ENCODE measurements at regions of chr12 and their contacts with region 1.

Region 1: GRCh38 chr12:75888874-75889613 is 142.5 kb downstream of the PHLDA1 start:
- DNase-seq: no peak
- ATAC-seq: no peak
- H3K4me3 ChIP-seq: no peak overlapping the region
- H3K4me3 Mint-ChIP-seq: no peak overlapping the region
- H3K27ac ChIP-seq: no peak overlapping the region
- H3K27ac Mint-ChIP-seq: no peak overlapping the region
- H3K4me1 ChIP-seq: no peaks in the 10 kb centered on the region
- H3K4me1 Mint-ChIP-seq: no peaks in the 10 kb centered on the region
- H3K27me3 ChIP-seq: no peaks in the 10 kb centered on the region
- H3K27me3 Mint-ChIP-seq: peaks cover 10 to 15% of the 10 kb centered on the region in 2 donors

Region 2: DNA sequence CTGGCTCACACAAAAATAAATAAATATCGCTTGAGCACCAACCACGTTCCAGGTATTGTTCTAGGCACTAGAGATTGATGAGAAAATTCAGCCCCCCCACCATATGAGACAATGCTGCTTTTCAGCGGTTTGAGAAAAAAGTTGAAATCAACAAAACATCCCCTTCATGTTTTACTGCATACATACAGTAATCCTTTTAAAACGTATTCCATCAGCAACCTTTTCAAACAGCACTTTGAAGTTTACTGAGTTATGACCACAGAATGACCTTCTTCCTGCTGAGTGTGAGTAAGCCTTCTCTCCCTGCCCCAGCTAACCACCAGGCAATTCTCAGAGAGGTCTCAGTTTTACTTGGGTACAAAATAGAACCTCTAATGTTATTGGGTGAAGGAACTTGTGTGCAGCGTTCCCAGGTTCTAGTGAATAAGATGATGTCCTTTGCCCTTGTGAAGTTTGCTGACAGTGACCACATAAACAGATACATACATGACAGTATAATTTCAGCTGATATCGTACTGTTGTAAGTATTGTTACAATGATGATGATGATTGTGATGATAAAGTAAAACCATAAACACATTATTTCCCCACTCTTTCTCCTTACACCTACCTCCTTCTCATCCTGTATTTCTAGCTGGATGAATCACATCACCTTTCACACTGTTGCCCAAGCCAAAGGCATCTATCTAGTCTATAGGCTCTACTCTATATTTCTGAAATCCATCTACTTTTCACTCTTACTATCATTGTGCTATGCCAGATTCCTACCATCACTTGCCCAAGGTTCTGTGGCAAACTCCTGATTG is 253.2 kb before region 1 on chr12:
- CTCF ChIA-PET with region 1: interaction called in 1 of 2 experiments, 11 read pairs
- POLR2A ChIA-PET with region 1: no interaction called
- DNase-seq: no peak
- ATAC-seq: peak in 1 of 4 experiments; percentile 55
- H3K4me3 ChIP-seq: no peak overlapping the region
- H3K4me3 Mint-ChIP-seq: no peak overlapping the region
- H3K27ac ChIP-seq: no peak overlapping the region
- H3K27ac Mint-ChIP-seq: no peak overlapping the region
- H3K4me1 ChIP-seq: peaks cover 0 to under 1% of the 10 kb centered on the region in 2 experiments
- H3K4me1 Mint-ChIP-seq: peaks cover 0 to 12% (median 6%) of the 10 kb centered on the region in 3 donors
- H3K27me3 ChIP-seq: no peaks in the 10 kb centered on the region
- H3K27me3 Mint-ChIP-seq: peaks cover 0 to 7% of the 10 kb centered on the region in 2 donors

Region 3: GRCh38 chr12:75774261-75775052 is 114.6 kb before region 1 on chr12:
- CTCF ChIA-PET with region 1: no interaction called
- POLR2A ChIA-PET with region 1: no interaction called
- DNase-seq: no peak
- ATAC-seq: no peak
- H3K4me3 ChIP-seq: no peak overlapping the region
- H3K4me3 Mint-ChIP-seq: no peak overlapping the region
- H3K27ac ChIP-seq: no peak overlapping the region
- H3K27ac Mint-ChIP-seq: no peak overlapping the region
- H3K4me1 ChIP-seq: no peaks in the 10 kb centered on the region
- H3K4me1 Mint-ChIP-seq: no peaks in the 10 kb centered on the region
- H3K27me3 ChIP-seq: no peaks in the 10 kb centered on the region
- H3K27me3 Mint-ChIP-seq: peaks cover 0 to 3% of the 10 kb centered on the region in 2 donors